ENCODE measurements at regions of chr10 and their contacts with region 1.

Region 1: GRCh38 chr10:119650692-119651513 is at the start of gene BAG3:
- DNase-seq: peak; percentile 82 to 98
- H3K4me3 ChIP-seq: peak within 1 kb of the TSS; percentile 99
- H3K27ac ChIP-seq: peak within 1 kb of the TSS; percentile 99
- H3K4me1 ChIP-seq: peaks cover 0 to 25% of the 10 kb centered on the region in 2 donors
- H3K27me3 ChIP-seq: no peaks in the 10 kb centered on the region
- CTCF ChIP-seq: no peak
- total RNA-seq, gene BAG3: 88.0 TPM

Region 2: GRCh38 chr10:118754720-118755480 is 896.0 kb before region 1 on chr10 and contains the start of gene CACUL1:
- intact Hi-C with region 1: loop called (anchors 10 kb)
- DNase-seq: peak; percentile 99 to 100
- H3K4me3 ChIP-seq: peak within 1 kb of the TSS; percentile 95 to 100
- H3K27ac ChIP-seq: peak within 1 kb of the TSS; percentile 77 to 79
- H3K4me1 ChIP-seq: peaks cover 4 to 19% of the 10 kb centered on the region in 2 donors
- H3K27me3 ChIP-seq: no peaks in the 10 kb centered on the region
- CTCF ChIP-seq: no peak
- total RNA-seq, gene CACUL1: 23.6 TPM

Region 3: GRCh38 chr10:119207367-119207668 is 443.6 kb before region 1 on chr10 and contains the start of gene GRK5:
- intact Hi-C with region 1: loop called (anchors 10 kb)
- DNase-seq: peak; percentile 91 to 98
- H3K4me3 ChIP-seq: peak within 1 kb of the TSS; percentile 91 to 99
- H3K27ac ChIP-seq: peak within 1 kb of the TSS; percentile 95 to 97
- H3K4me1 ChIP-seq: peaks cover 2 to 28% of the 10 kb centered on the region in 2 donors
- H3K27me3 ChIP-seq: no peaks in the 10 kb centered on the region
- CTCF ChIP-seq: no peak
- total RNA-seq, gene GRK5: 75.5 TPM

Region 4: DNA sequence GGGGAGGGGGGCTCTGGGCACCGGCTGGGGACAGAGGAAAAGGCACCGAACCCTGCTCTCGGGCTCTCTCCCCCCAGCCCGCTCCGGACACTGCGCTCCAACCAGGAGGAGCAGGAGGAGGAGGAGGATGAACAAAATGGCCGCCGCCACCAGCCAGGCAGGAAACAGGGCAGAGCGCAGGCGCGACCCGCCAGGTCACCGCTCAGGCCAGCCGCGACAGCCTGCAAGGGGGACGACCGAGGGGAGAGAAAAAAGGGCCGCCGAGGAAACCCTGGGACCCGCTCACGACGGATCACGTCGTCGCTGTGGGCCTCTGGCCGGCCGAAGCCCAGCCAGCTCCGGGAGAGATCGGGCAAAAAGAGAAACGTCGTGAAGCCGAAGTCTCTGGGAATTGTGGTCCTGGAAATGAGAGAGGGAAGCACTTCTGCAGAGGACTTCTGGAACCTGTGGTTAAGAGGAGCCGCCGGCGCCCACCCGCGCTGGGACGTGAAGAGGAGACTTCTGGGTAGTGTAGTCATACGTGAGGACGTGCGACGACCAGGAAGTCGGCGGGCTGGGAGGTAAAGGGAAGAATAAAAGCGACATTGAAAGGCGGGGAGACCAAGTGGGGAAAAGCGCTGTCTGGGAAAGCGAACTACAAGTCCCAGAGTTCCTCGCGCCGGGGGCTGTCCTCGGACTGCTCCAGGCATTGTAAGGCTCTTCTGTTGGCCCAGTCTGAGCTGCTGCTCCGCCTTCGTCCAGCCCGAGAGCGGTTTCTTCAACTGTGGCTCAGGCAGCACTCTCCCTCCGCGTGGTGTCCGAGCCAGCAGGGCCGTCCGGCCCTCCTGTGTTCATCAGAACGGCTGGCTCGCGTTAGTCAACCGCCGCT is 54.1 kb before region 1 on chr10 and contains the start of gene TIAL1:
- intact Hi-C with region 1: loop called (anchors 1 kb)
- DNase-seq: peak; percentile 97 to 99
- H3K4me3 ChIP-seq: peak within 1 kb of the TSS; percentile 64 to 70
- H3K27ac ChIP-seq: peak within 1 kb of the TSS; percentile 95 to 98
- H3K4me1 ChIP-seq: peaks cover 0 to 31% of the 10 kb centered on the region in 2 donors
- H3K27me3 ChIP-seq: no peaks in the 10 kb centered on the region
- CTCF ChIP-seq: no peak
- total RNA-seq, gene TIAL1: 35.5 TPM

Region 5: DNA sequence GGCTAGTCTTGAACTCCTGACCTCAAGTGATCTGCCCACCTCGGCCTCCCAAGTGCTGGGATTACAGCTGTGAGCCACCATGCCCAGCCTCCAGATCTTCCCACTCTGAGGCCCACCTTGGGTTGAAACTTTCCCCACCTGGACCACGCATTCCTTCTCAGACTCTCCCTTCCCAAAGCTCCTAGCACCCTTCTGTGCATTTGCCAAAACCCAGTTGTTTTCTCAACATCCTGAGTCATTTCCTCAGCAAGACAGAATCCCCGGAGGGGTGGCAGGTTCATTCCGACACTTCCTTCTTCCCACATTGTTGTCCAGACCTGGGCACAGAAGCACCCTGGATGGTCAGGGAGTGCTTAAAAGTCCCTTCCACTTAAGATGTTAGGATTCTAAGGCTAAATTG is 29.1 kb after region 1 on chr10:
- intact Hi-C with region 1: loop called (anchors 1 kb)
- DNase-seq: peak in 1 of 2 donors; percentile 79
- H3K4me3 ChIP-seq: no peak overlapping the region
- H3K27ac ChIP-seq: peak overlapping the region; percentile 84 to 89
- H3K4me1 ChIP-seq: peaks cover 16 to 41% of the 10 kb centered on the region in 2 donors
- H3K27me3 ChIP-seq: no peaks in the 10 kb centered on the region
- CTCF ChIP-seq: no peak

Region 6: GRCh38 chr10:119725828-119726675 is 75.1 kb after region 1 on chr10 and contains the start of gene INPP5F:
- intact Hi-C with region 1: loop called (anchors 2 kb)
- DNase-seq: peak; percentile 94 to 99
- H3K4me3 ChIP-seq: peak within 1 kb of the TSS; percentile 86 to 94
- H3K27ac ChIP-seq: peak within 1 kb of the TSS; percentile 93 to 94
- H3K4me1 ChIP-seq: peaks cover 7 to 14% of the 10 kb centered on the region in 2 donors
- H3K27me3 ChIP-seq: no peaks in the 10 kb centered on the region
- CTCF ChIP-seq: peak; percentile 24 to 49 (median 34)
- total RNA-seq, gene INPP5F: 5.1 TPM